ENCODE measurements at regions of chr3 and their contacts with region 1.

Region 1: GRCh38 chr3:131033480-131034080 is 6.9 kb downstream of the NEK11 start:
- DNase-seq: peak; percentile 51
- H3K4me3 ChIP-seq: peak overlapping the region in 1 of 2 experiments; percentile 6; a peak in 1 of 4 replicates
- H3K27ac ChIP-seq: no peak overlapping the region
- H3K4me1 ChIP-seq: no peaks in the 10 kb centered on the region
- H3K27me3 ChIP-seq: no peaks in the 10 kb centered on the region
- CTCF ChIP-seq: peak; percentile 85
- EP300 ChIP-seq: no peak
- RAD21 ChIP-seq: peak; percentile 83

Region 2: DNA sequence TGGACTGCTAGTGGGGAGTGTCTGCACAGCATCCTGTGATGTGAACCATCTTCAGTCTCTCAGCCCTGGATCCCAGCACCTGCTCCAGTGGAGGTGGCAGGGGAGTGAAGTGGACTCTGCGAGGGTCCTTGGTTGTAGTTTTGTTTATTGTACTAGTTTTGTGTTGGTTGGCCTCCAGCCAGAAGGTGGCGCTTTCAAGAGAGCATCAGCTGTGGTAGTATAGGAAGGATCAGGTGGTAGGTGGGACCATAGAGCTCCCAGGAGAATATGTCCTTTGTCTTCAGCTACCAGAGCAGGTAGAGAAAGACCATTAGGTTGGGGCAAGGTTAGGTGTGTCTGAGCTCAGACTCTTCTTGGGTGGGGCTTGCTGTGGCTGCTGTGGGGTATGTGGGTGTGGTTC is 14.0 kb after region 1 on chr3:
- CTCF ChIA-PET with region 1: interaction called, 12 read pairs
- POLR2A ChIA-PET with region 1: no interaction called
- DNase-seq: no peak
- H3K4me3 ChIP-seq: no peak overlapping the region
- H3K27ac ChIP-seq: no peak overlapping the region
- H3K4me1 ChIP-seq: no peaks in the 10 kb centered on the region
- H3K27me3 ChIP-seq: no peaks in the 10 kb centered on the region
- CTCF ChIP-seq: peak; percentile 16; the same call in 1 of the 2 replicates
- EP300 ChIP-seq: no peak
- RAD21 ChIP-seq: no peak

Region 3: GRCh38 chr3:131053043-131053859 is 19.7 kb after region 1 on chr3:
- CTCF ChIA-PET with region 1: interaction called, 12 read pairs
- POLR2A ChIA-PET with region 1: no interaction called
- DNase-seq: peak; percentile 29
- H3K4me3 ChIP-seq: no peak overlapping the region
- H3K27ac ChIP-seq: no peak overlapping the region
- H3K4me1 ChIP-seq: peaks cover 0 to 2% of the 10 kb centered on the region in 2 experiments; a peak in 1 of 4 replicates
- H3K27me3 ChIP-seq: no peaks in the 10 kb centered on the region
- CTCF ChIP-seq: peak; percentile 56
- EP300 ChIP-seq: no peak
- RAD21 ChIP-seq: peak; percentile 85